HCT116 (cell line): ENCODE measurements at regions of chr18 and their contacts with region 1.

Region 1: GRCh38 chr18:27400001-27400400 is 214.9 kb upstream of the CHST9 start:
- DNase-seq: no peak
- ATAC-seq: no peak
- H3K4me3 ChIP-seq: no peak overlapping the region
- H3K27ac ChIP-seq: no peak overlapping the region
- H3K4me1 ChIP-seq: no peaks in the 10 kb centered on the region
- H3K27me3 ChIP-seq: no peaks in the 10 kb centered on the region
- CTCF ChIP-seq: no peak; a peak in 1 of 6 replicates
- POLR2A ChIP-seq: no peak
- RAD21 ChIP-seq: no peak

Region 2: DNA sequence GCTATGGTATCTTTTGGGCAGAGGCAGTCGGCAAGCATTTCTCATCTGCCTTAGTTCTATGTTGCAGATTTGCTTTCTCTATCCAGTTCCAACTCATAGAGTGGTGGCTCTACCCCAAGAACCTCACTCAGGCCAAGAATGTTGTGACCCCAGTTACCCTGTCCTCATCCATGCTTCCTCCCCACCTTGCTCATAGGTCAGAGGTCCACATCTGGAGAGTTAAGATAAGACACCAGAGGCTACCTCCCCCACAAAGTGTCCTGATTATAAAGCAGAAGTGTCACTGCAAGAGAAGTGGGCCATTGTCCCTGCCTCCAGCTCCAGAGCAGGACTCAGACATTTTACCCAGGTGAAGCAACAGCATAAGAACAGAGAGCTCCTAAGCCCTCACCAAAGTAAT is 62.0 kb after region 1 on chr18:
- CTCF ChIA-PET with region 1: no interaction called
- POLR2A ChIA-PET with region 1: no interaction called
- RAD21 ChIA-PET with region 1: no interaction called
- intact Hi-C with region 1: loop called (anchors 10 kb)
- DNase-seq: no peak
- ATAC-seq: no peak
- H3K4me3 ChIP-seq: no peak overlapping the region
- H3K27ac ChIP-seq: no peak overlapping the region
- H3K4me1 ChIP-seq: no peaks in the 10 kb centered on the region
- H3K27me3 ChIP-seq: no peaks in the 10 kb centered on the region
- CTCF ChIP-seq: no peak
- POLR2A ChIP-seq: no peak
- RAD21 ChIP-seq: no peak